ENCODE measurements at regions of chr15 and their contacts with region 1.

Region 1: GRCh38 chr15:76931397-76932007 is at the start of gene RCN2:
- DNase-seq: peak; percentile 93
- H3K4me3 Mint-ChIP-seq: peak within 1 kb of the TSS; percentile 85
- H3K27ac Mint-ChIP-seq: peak within 1 kb of the TSS; percentile 85
- H3K4me1 Mint-ChIP-seq: peaks cover 26% of the 10 kb centered on the region
- H3K27me3 Mint-ChIP-seq: peaks cover 14% of the 10 kb centered on the region
- total RNA-seq, gene RCN2: 35.7 and 36.1 TPM in 2 replicates

Region 2: GRCh38 chr15:76905013-76905839 is 26.3 kb before region 1 on chr15 and contains the start of gene SCAPER:
- intact Hi-C with region 1: loop called (anchors 1 kb)
- DNase-seq: peak; percentile 86
- H3K4me3 Mint-ChIP-seq: peak within 1 kb of the TSS; percentile 89
- H3K27ac Mint-ChIP-seq: peak within 1 kb of the TSS; percentile 90
- H3K4me1 Mint-ChIP-seq: peaks cover 25% of the 10 kb centered on the region
- H3K27me3 Mint-ChIP-seq: peaks cover 5% of the 10 kb centered on the region
- total RNA-seq, gene SCAPER: 22.8 and 24.7 TPM in 2 replicates

Region 3: GRCh38 chr15:76994971-76995945 is 63.8 kb after region 1 on chr15 and contains the start of gene PSTPIP1:
- intact Hi-C with region 1: loop called (anchors 2 kb)
- DNase-seq: peak; percentile 61
- H3K4me3 Mint-ChIP-seq: peak within 1 kb of the TSS; percentile 92
- H3K27ac Mint-ChIP-seq: peak within 1 kb of the TSS; percentile 90
- H3K4me1 Mint-ChIP-seq: peaks cover 63% of the 10 kb centered on the region
- H3K27me3 Mint-ChIP-seq: no peaks in the 10 kb centered on the region
- total RNA-seq, gene PSTPIP1: 167 and 169 TPM in 2 replicates